K562 (cell line): ENCODE measurements at regions of chr6 and their contacts with region 1.

Region 1: GRCh38 chr6:116779573-116780164 is 14.2 kb upstream of the FAM162B start:
- DNase-seq: peak; percentile 10 to 70 (median 19)
- ATAC-seq: peak; percentile 93
- H3K4me3 ChIP-seq: no peak overlapping the region
- H3K27ac ChIP-seq: no peak overlapping the region
- H3K4me1 ChIP-seq: no peaks in the 10 kb centered on the region
- H3K27me3 ChIP-seq: no peaks in the 10 kb centered on the region
- CTCF ChIP-seq: peak; percentile 40 to 60 (median 46); a peak in 4 of 6 replicates
- EP300 ChIP-seq: no peak
- POLR2A ChIP-seq: no peak
- RAD21 ChIP-seq: peak; percentile 51 to 65; a peak in 3 of 4 replicates

Region 2: GRCh38 chr6:116847227-116847626 is 67.6 kb after region 1 on chr6:
- CTCF ChIA-PET with region 1: interaction called, 6 read pairs
- POLR2A ChIA-PET with region 1: no interaction called
- in situ Hi-C with region 1: no loop called
- intact Hi-C with region 1: loop called (anchors 1 kb)
- DNase-seq: peak in 2 of 4 experiments; percentile 17 to 38
- ATAC-seq: peak; percentile 90
- H3K4me3 ChIP-seq: no peak overlapping the region
- H3K27ac ChIP-seq: no peak overlapping the region
- H3K4me1 ChIP-seq: no peaks in the 10 kb centered on the region
- H3K27me3 ChIP-seq: no peaks in the 10 kb centered on the region
- CTCF ChIP-seq: peak; percentile 28 to 67 (median 33); a peak in 3 of 6 replicates
- EP300 ChIP-seq: no peak
- POLR2A ChIP-seq: no peak
- RAD21 ChIP-seq: peak; percentile 59 to 62

Region 3: GRCh38 chr6:117326396-117326795 is 546.7 kb after region 1 on chr6:
- CTCF ChIA-PET with region 1: no interaction called
- POLR2A ChIA-PET with region 1: no interaction called
- in situ Hi-C with region 1: no loop called
- intact Hi-C with region 1: loop called (anchors 10 kb)
- DNase-seq: no peak
- ATAC-seq: no peak
- H3K4me3 ChIP-seq: no peak overlapping the region
- H3K27ac ChIP-seq: no peak overlapping the region
- H3K4me1 ChIP-seq: no peaks in the 10 kb centered on the region; a peak in 1 of 5 replicates
- H3K27me3 ChIP-seq: no peaks in the 10 kb centered on the region
- CTCF ChIP-seq: no peak
- EP300 ChIP-seq: no peak
- POLR2A ChIP-seq: no peak
- RAD21 ChIP-seq: no peak